ENCODE measurements at regions of chr14 and their contacts with region 1.

Region 1: GRCh38 chr14:100108042-100108825 is 43.0 kb downstream of the EVL start:
- DNase-seq: peak; percentile 79 to 85
- H3K4me3 ChIP-seq: no peak overlapping the region
- H3K27ac ChIP-seq: peak overlapping the region; percentile 1 to 46
- H3K4me1 ChIP-seq: peaks cover 5 to 73% (median 49%) of the 10 kb centered on the region in 4 donors
- H3K27me3 ChIP-seq: no peaks in the 10 kb centered on the region
- CTCF ChIP-seq: peak; percentile 84 to 87

Region 2: GRCh38 chr14:99982537-99983250 is 125.5 kb before region 1 on chr14:
- intact Hi-C with region 1: loop called (anchors 2 kb)
- DNase-seq: no peak
- H3K4me3 ChIP-seq: no peak overlapping the region
- H3K27ac ChIP-seq: no peak overlapping the region
- H3K4me1 ChIP-seq: no peaks in the 10 kb centered on the region
- H3K27me3 ChIP-seq: no peaks in the 10 kb centered on the region
- CTCF ChIP-seq: peak; percentile 84 to 89

Region 3: DNA sequence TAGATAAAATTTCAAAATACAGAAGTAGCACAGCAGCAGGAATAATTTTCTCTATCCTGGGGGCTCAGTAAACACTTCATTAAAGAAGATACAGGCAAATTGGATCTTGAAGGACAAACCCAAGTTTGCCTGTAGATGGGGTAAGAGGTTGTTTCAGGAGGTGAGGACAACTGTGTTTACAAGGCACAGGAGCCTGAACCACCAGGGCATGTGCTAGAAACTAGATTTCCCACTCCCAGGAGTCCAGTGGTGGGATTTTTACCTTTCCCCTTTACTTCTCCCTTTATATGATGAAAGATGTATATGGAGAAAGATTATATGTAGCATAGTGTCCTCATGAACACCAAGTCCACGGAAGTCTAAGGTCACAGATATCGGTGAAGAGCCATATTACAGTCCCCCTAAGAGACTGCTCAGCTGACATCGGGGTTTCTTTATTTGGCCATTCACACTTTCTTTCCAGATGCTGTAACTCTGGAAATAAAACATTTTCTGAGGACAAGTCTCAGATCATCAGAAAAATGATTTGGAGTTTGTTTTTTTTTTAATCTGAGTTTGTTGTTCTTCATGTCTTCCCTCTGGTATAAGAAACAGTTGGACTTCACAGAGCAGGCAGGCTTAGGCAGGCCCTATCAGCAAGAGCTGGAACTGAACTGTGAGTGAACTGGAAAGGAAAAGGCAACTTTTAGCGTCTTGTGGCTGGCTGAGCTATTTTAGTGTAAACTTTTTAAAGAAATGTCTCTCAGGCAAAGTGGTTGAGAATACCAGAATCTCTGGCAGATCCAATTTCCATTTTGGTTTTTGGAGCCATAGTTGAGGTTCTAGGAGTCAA is 51.1 kb before region 1 on chr14:
- intact Hi-C with region 1: loop called (anchors 10 kb)
- DNase-seq: no peak
- H3K4me3 ChIP-seq: no peak overlapping the region
- H3K27ac ChIP-seq: peak overlapping the region; percentile 25 to 45
- H3K4me1 ChIP-seq: peaks cover 0 to 13% (median 3%) of the 10 kb centered on the region in 4 donors
- H3K27me3 ChIP-seq: no peaks in the 10 kb centered on the region
- CTCF ChIP-seq: peak; percentile 30 to 46

Region 4: DNA sequence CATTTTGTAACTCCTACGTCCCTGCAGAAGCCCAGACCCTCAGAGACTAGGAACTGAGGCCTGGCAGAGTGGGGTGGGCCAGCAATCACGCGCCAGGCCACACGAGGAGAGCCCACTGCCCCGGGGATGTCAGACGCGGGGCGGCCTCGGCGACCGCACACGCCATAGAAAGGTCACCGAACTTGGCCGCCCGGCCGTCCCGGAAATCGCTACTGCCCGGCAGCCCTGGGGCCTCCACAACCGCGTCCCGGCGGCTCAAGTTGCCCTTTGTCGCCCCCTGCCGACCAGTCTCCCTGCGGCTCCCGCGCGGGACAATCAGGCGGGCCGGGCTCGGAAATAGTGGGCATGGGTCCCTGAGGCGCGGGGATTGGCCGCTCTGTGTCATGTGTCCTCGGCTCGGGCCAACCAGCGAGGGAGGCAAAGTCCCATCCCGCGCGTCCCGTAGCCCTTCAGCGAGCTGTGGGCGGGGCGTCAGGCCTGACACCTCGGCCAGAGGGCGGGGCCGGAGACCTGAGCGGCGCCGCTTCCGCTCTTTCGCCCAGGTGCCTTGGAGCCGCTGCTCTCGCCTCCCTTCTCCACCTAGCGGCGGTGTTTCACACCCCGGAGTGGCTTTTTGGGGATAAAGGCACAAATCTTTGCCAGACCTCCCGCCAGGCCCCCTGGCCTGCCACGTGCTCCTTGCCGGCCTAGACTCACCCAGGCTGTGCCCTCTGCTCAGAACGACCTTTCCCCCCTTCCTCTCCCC is 84.6 kb after region 1 on chr14:
- intact Hi-C with region 1: loop called (anchors 10 kb)
- DNase-seq: peak; percentile 99
- H3K4me3 ChIP-seq: peak overlapping the region; percentile 51 to 57
- H3K27ac ChIP-seq: peak overlapping the region; percentile 87 to 95
- H3K4me1 ChIP-seq: peaks cover 0 to 15% (median 9%) of the 10 kb centered on the region in 4 donors
- H3K27me3 ChIP-seq: no peaks in the 10 kb centered on the region
- CTCF ChIP-seq: peak; percentile 91 to 94

Region 5: DNA sequence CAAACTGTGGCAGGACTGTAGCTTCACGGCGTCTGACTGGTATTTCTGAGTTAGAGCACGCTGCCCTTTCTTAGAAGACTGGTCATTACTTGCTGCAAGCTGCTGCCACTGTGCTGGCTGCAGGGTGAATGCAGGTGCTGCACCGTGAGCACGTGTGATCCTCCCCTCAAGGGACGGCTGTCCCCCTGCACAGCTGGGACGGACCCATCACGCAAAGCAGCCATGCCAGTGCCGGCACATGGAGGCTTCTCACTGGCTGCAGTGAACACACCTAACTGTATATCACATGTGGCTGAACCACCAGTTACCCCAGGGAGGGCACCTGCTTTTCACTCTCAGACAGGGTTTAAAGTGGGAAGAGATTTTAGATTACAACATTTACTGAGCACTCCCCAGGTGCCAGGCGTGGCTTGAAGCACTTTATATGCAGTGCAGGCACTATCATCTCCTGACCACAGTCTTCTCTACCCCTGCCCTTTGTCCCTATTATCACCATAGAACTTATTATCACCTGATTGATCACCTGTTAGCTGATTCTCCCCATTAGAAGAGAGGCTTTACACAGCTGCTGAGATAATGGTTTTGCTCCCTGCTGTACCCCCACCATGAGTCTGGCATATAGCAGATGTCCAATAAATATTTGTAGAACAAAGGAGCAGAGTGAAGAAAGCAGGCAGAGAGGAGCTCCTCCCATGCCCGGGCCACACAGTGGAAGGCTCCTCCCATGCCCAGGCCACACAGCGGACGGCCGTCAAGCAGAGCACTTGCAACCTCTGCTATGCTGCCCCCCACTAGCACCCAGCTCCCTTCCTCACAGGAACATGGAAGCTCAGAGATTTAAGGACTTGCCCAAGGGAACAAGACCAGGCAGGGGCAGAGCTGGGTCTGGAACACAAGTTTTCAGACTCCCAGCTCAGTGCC is 240.8 kb after region 1 on chr14:
- intact Hi-C with region 1: no loop called
- DNase-seq: no peak
- H3K4me3 ChIP-seq: no peak overlapping the region
- H3K27ac ChIP-seq: no peak overlapping the region
- H3K4me1 ChIP-seq: no peaks in the 10 kb centered on the region
- H3K27me3 ChIP-seq: no peaks in the 10 kb centered on the region
- CTCF ChIP-seq: no peak

Region 6: GRCh38 chr14:100617410-100618317 is 509.4 kb after region 1 on chr14:
- intact Hi-C with region 1: no loop called
- DNase-seq: peak; percentile 10 to 64
- H3K4me3 ChIP-seq: no peak overlapping the region
- H3K27ac ChIP-seq: no peak overlapping the region
- H3K4me1 ChIP-seq: peaks cover 0 to 12% (median 5%) of the 10 kb centered on the region in 4 donors
- H3K27me3 ChIP-seq: peaks cover 0 to 66% of the 10 kb centered on the region in 2 donors
- CTCF ChIP-seq: no peak

Measured in tibial artery (tissue), 4 donors.